Activated naive CD4-positive, alpha-beta T cell treated with anti-CD3 and anti-CD28 coated beads for 36 hours (primary cell): ENCODE measurements at regions of chr2 and their contacts with region 1.

Region 1: GRCh38 chr2:175282290-175282689 is 100.8 kb upstream of the ATP5MC3 start:
- DNase-seq: no peak
- H3K4me3 Mint-ChIP-seq: no peak overlapping the region
- H3K27ac Mint-ChIP-seq: no peak overlapping the region
- H3K4me1 Mint-ChIP-seq: no peaks in the 10 kb centered on the region
- H3K27me3 Mint-ChIP-seq: no peaks in the 10 kb centered on the region

Region 2: GRCh38 chr2:175030380-175031271 is 251.7 kb before region 1 on chr2:
- CTCF ChIA-PET with region 1: interaction called, 4 read pairs
- intact Hi-C with region 1: loop called (anchors 1 kb)
- DNase-seq: peak; percentile 52
- H3K4me3 Mint-ChIP-seq: no peak overlapping the region
- H3K27ac Mint-ChIP-seq: no peak overlapping the region
- H3K4me1 Mint-ChIP-seq: no peaks in the 10 kb centered on the region
- H3K27me3 Mint-ChIP-seq: no peaks in the 10 kb centered on the region

Region 3: GRCh38 chr2:175036582-175037018 is 245.7 kb before region 1 on chr2:
- CTCF ChIA-PET with region 1: interaction called, 4 read pairs
- intact Hi-C with region 1: loop called (anchors 1 kb)
- DNase-seq: no peak
- H3K4me3 Mint-ChIP-seq: no peak overlapping the region
- H3K27ac Mint-ChIP-seq: no peak overlapping the region
- H3K4me1 Mint-ChIP-seq: peaks cover 6% of the 10 kb centered on the region
- H3K27me3 Mint-ChIP-seq: no peaks in the 10 kb centered on the region

Region 4: GRCh38 chr2:175111200-175111657 is 171.1 kb before region 1 on chr2:
- CTCF ChIA-PET with region 1: interaction called, 7 read pairs
- intact Hi-C with region 1: loop called (anchors 1 kb)
- DNase-seq: no peak
- H3K4me3 Mint-ChIP-seq: no peak overlapping the region
- H3K27ac Mint-ChIP-seq: no peak overlapping the region
- H3K4me1 Mint-ChIP-seq: peaks cover 3% of the 10 kb centered on the region
- H3K27me3 Mint-ChIP-seq: no peaks in the 10 kb centered on the region

Region 5: DNA sequence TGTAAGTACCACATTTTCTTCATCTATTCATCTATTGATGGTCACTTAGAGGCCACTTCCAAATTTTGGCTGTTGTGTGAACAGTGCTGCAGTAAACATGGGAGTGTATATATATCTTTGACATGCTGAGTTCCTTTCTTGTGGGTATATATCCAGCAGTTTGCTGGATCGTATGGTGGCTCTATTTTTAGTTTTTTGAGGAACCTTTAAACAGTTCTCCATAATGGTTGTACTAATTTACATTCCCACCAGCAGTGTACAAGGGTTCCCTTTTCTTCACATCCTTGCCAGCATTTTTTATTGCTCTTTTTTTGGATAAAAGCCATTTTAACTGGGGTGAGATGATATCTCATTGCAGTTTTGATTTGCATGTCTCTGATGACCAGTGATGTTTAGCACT is 93.5 kb before region 1 on chr2:
- CTCF ChIA-PET with region 1: no interaction called
- intact Hi-C with region 1: no loop called
- DNase-seq: no peak
- H3K4me3 Mint-ChIP-seq: no peak overlapping the region
- H3K27ac Mint-ChIP-seq: no peak overlapping the region
- H3K4me1 Mint-ChIP-seq: no peaks in the 10 kb centered on the region
- H3K27me3 Mint-ChIP-seq: peaks cover 12% of the 10 kb centered on the region

Region 6: DNA sequence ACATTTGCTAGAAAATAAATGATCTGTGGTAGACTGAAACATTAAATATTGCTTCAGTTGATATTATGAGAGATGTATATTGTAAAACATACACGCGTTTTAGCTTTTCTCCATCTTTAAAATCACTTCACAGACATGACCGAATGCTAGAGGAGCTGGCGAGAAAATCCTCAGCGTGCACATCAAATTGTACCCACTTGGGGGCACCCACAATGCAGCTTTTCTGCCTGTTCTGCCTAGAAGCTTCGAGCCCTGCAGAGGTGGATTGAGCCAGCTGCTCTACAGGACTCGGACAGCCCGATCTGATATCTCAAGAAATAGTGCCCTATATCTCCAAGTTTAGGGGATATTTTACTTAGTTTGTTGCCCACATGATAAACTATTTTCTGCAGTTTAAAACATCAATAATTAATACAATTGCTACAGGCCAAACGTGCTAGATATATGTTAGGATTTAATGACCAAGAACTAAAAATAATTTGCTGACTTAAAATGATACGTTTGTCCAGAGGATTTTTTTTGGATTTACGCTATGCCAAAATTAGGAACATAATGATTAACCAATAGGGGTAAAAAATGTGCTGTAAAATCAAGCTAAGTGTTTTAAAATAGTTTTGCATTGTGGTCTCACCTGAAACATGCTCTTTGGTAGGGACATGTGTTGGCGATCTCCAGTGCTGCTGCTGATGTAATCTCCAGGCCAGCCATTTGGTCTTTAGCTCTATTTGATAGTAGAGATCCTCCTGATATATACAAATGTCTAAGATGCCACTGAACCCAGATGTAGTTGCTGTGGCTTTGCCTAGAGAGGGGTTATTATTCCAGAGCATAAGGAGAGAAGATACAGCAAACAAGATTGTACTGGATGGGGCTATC is 78.4 kb before region 1 on chr2:
- CTCF ChIA-PET with region 1: interaction called, 28 read pairs
- intact Hi-C with region 1: loop called (anchors 1 kb)
- DNase-seq: peak; percentile 67
- H3K4me3 Mint-ChIP-seq: no peak overlapping the region
- H3K27ac Mint-ChIP-seq: no peak overlapping the region
- H3K4me1 Mint-ChIP-seq: peaks cover 2% of the 10 kb centered on the region
- H3K27me3 Mint-ChIP-seq: peaks cover 7% of the 10 kb centered on the region

Region 7: GRCh38 chr2:175218551-175218950 is 63.7 kb before region 1 on chr2:
- CTCF ChIA-PET with region 1: no interaction called
- intact Hi-C with region 1: no loop called
- DNase-seq: no peak
- H3K4me3 Mint-ChIP-seq: no peak overlapping the region
- H3K27ac Mint-ChIP-seq: no peak overlapping the region
- H3K4me1 Mint-ChIP-seq: no peaks in the 10 kb centered on the region
- H3K27me3 Mint-ChIP-seq: peaks cover 26% of the 10 kb centered on the region

Region 8: DNA sequence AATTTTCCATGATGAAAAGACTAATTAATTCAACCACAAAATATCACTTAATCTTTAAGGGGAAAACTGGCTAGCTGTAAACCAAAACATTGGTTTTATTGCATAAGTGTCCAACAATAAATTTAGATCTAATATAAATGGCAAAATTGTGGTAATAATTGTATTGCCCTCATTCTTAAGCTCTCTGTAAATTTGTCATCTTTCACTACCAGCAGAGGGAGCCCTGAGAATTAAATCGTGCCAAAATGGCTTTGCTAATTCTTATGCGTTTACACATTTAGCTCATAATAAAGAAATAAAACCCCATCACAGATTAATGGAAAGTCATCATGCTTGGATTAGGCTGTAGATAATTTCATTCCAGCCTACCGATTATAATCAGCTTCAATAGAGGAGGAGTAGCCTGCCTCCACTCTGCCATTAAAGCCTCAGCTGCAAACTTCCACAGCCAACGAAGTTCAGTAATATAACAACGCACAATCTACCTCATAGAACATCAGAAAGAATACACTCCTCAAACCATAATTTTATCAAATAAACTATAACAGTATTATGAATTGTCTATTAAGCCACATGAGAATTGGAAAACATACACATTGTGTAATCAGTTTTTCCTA is 30.8 kb before region 1 on chr2:
- CTCF ChIA-PET with region 1: interaction called, 58 read pairs
- intact Hi-C with region 1: loop called (anchors 1 kb)
- DNase-seq: peak; percentile 12
- H3K4me3 Mint-ChIP-seq: no peak overlapping the region
- H3K27ac Mint-ChIP-seq: no peak overlapping the region
- H3K4me1 Mint-ChIP-seq: no peaks in the 10 kb centered on the region
- H3K27me3 Mint-ChIP-seq: peaks cover 20% of the 10 kb centered on the region